CD8-positive, alpha-beta T cell (primary cell): ENCODE measurements at regions of chr13 and their contacts with region 1.

Region 1: GRCh38 chr13:49749848-49750247 is 42.6 kb downstream of the KPNA3 start:
- DNase-seq: no peak
- ATAC-seq: no peak
- H3K4me3 ChIP-seq: no peak overlapping the region
- H3K4me3 Mint-ChIP-seq: no peak overlapping the region
- H3K27ac ChIP-seq: no peak overlapping the region
- H3K27ac Mint-ChIP-seq: no peak overlapping the region
- H3K4me1 ChIP-seq: no peaks in the 10 kb centered on the region
- H3K4me1 Mint-ChIP-seq: peaks cover 46% of the 10 kb centered on the region
- H3K27me3 ChIP-seq: no peaks in the 10 kb centered on the region
- H3K27me3 Mint-ChIP-seq: no peaks in the 10 kb centered on the region
- CTCF ChIP-seq: no peak

Region 2: DNA sequence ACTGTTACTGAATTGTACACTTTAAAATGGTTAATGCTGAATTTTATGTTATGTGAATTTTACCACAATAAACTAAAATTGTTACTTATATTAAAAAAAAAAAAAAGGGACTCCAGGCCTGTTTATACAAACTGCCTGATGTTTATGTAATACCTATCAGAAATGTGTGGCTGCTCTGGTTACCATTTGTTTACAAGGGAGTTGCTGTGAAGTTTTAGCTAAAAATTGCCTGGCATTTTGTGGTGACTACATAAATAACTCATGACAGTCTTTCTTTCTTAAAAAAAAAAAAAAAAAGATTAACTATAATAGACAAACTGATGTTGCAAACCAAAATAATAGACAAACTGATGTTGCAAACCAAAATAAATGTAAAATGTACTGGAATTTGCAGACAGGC is 430.3 kb before region 1 on chr13:
- CTCF ChIA-PET with region 1: no interaction called
- POLR2A ChIA-PET with region 1: no interaction called
- intact Hi-C with region 1: no loop called
- DNase-seq: no peak
- ATAC-seq: no peak
- H3K4me3 ChIP-seq: no peak overlapping the region
- H3K4me3 Mint-ChIP-seq: no peak overlapping the region
- H3K27ac ChIP-seq: no peak overlapping the region
- H3K27ac Mint-ChIP-seq: no peak overlapping the region
- H3K4me1 ChIP-seq: peaks cover 9% of the 10 kb centered on the region
- H3K4me1 Mint-ChIP-seq: peaks cover 10% of the 10 kb centered on the region
- H3K27me3 ChIP-seq: no peaks in the 10 kb centered on the region
- H3K27me3 Mint-ChIP-seq: no peaks in the 10 kb centered on the region
- CTCF ChIP-seq: no peak

Region 3: GRCh38 chr13:51549050-51549449 is 1799.2 kb after region 1 on chr13:
- CTCF ChIA-PET with region 1: no interaction called
- POLR2A ChIA-PET with region 1: no interaction called
- intact Hi-C with region 1: loop called in 1 of 2 experiments (anchors 5 kb)
- DNase-seq: peak in 1 of 9 experiments; percentile 17
- ATAC-seq: no peak
- H3K4me3 ChIP-seq: no peak overlapping the region
- H3K4me3 Mint-ChIP-seq: no peak overlapping the region
- H3K27ac ChIP-seq: no peak overlapping the region
- H3K27ac Mint-ChIP-seq: no peak overlapping the region
- H3K4me1 ChIP-seq: no peaks in the 10 kb centered on the region
- H3K4me1 Mint-ChIP-seq: no peaks in the 10 kb centered on the region
- H3K27me3 ChIP-seq: no peaks in the 10 kb centered on the region
- H3K27me3 Mint-ChIP-seq: no peaks in the 10 kb centered on the region
- CTCF ChIP-seq: no peak